Left lung (tissue), 14 donors: ENCODE measurements at regions of chr6 and their contacts with region 1.

Region 1: DNA sequence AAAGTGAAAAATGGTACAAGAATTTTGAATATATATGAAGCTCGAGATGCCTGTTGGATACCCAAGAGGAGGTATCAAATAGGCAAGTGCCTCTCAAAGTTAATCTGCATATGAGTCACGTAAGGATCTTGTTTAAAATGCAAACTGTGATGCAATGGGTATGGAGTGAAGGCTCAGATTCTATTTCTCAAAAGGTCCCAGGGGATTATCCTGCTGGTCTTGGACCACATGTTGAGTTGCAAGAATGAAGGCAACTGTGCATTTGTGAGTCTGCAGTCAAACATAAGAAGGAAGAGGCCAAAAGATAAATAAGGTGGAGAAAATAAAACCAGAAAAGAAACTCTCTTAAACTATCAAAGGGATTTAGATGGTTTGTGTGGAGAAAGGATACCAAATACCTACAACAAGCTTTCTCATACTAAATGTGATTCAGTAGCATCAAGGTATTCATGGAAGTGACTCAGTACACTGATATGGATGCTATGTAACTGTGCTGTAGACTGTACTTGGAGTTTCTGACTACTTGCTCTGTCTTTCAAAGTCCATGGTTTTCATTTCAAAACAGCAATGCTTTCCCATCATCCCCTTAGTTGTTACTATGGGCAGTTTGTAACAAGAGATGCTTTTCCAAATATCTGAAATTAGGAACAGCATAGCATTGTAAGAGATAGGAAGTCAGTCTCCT is 106.3 kb downstream of the GFRAL start:
- DNase-seq: no peak
- ATAC-seq: no peak
- H3K4me3 ChIP-seq: no peak overlapping the region
- H3K27ac ChIP-seq: no peak overlapping the region
- H3K4me1 ChIP-seq: no peaks in the 10 kb centered on the region
- H3K27me3 ChIP-seq: no peaks in the 10 kb centered on the region
- CTCF ChIP-seq: no peak

Region 2: DNA sequence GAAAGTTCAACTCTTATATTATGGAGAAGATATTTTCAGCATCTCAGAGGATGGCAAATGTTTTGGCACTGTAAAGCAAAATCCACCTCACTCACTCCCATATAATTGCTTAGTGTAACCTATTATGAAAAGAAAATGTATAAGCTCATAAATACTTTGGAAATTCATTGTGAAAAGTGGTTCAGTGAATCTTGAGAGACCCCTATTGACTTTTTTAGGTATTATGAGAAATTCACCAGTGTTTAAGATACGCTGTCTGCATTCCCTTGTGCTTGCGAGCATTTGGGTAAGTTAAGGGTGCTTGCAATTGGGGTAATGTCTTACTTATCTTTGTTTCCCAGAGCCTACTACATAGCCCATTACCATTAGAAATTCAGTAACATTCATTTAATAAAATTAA is 508.1 kb after region 1 on chr6:
- intact Hi-C with region 1: loop called in 1 of 2 experiments (anchors 10 kb)
- DNase-seq: no peak
- ATAC-seq: no peak
- H3K4me3 ChIP-seq: no peak overlapping the region
- H3K27ac ChIP-seq: no peak overlapping the region
- H3K4me1 ChIP-seq: no peaks in the 10 kb centered on the region
- H3K27me3 ChIP-seq: no peaks in the 10 kb centered on the region
- CTCF ChIP-seq: no peak